HepG2 (cell line): ENCODE measurements at regions of chr15 and their contacts with region 1.

Region 1: GRCh38 chr15:94815110-94815731 is 583.9 kb downstream of the MCTP2 start:
- DNase-seq: no peak
- ATAC-seq: no peak
- H3K4me3 ChIP-seq: no peak overlapping the region
- H3K27ac ChIP-seq: no peak overlapping the region
- H3K4me1 ChIP-seq: no peaks in the 10 kb centered on the region
- H3K27me3 ChIP-seq: no peaks in the 10 kb centered on the region
- CTCF ChIP-seq: no peak
- EP300 ChIP-seq: no peak
- POLR2A ChIP-seq: no peak
- RAD21 ChIP-seq: no peak

Region 2: GRCh38 chr15:94563455-94563854 is 251.8 kb before region 1 on chr15:
- CTCF ChIA-PET with region 1: no interaction called
- POLR2A ChIA-PET with region 1: no interaction called
- in situ Hi-C with region 1: no loop called
- intact Hi-C with region 1: no loop called
- DNase-seq: no peak
- ATAC-seq: no peak
- H3K4me3 ChIP-seq: no peak overlapping the region
- H3K27ac ChIP-seq: no peak overlapping the region
- H3K4me1 ChIP-seq: no peaks in the 10 kb centered on the region
- H3K27me3 ChIP-seq: no peaks in the 10 kb centered on the region
- CTCF ChIP-seq: no peak
- EP300 ChIP-seq: no peak
- POLR2A ChIP-seq: no peak
- RAD21 ChIP-seq: no peak

Region 3: GRCh38 chr15:94722024-94722636 is 93.1 kb before region 1 on chr15:
- CTCF ChIA-PET with region 1: no interaction called
- POLR2A ChIA-PET with region 1: no interaction called
- in situ Hi-C with region 1: loop called (anchors 25 kb)
- intact Hi-C with region 1: no loop called
- DNase-seq: no peak
- ATAC-seq: no peak
- H3K4me3 ChIP-seq: no peak overlapping the region
- H3K27ac ChIP-seq: no peak overlapping the region
- H3K4me1 ChIP-seq: no peaks in the 10 kb centered on the region
- H3K27me3 ChIP-seq: no peaks in the 10 kb centered on the region
- CTCF ChIP-seq: no peak
- EP300 ChIP-seq: no peak
- POLR2A ChIP-seq: no peak
- RAD21 ChIP-seq: no peak